BJ (cell line): ENCODE measurements at regions of chr11 and their contacts with region 1.

Region 1: DNA sequence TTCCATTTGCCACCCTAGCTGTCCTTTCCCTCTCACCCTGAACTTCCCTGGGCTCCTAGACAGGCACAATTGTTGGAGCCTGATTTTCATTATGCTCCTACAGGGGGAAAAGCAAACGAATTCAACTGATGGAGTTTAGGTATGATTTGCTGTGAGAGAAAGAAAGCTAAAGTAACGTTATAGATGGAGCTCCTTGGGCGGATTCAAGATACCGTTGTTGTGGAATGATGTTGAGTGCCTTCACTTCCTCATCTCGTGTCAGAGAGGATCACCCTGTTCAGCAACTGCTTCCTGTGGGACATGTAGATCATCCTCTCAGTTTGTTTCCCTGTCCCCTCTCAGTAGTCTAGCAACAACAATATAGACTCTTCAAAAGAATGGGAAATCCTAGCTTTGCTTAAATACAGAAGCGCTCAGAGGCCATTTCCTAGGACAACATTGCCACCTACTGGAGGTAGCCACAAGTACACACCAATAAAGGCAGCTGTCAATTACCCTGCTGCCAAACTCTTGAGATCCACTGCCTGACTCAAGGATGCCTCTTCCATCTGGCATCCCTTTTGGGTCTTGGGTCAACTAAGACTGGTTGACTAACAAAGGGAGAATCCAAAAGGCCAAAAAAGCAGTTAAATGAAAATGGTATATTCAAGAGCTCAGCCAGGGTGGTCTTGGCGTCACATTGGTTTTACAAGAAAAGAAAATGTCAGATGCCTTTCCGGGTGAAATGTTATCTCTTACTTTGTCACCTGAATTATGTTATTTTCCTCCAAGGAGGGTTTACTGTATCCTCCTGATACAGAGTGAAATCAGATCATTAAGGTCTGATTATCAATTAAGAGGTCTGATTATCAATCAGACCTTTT is 13.5 kb upstream of the DTX4 start:
- DNase-seq: no peak
- H3K4me3 ChIP-seq: no peak overlapping the region
- H3K27me3 ChIP-seq: peaks cover 4% of the 10 kb centered on the region
- CTCF ChIP-seq: peak; percentile 76

Region 2: GRCh38 chr11:58567889-58568512 is 590.4 kb before region 1 on chr11:
- CTCF ChIA-PET with region 1: interaction called, 11 read pairs
- POLR2A ChIA-PET with region 1: no interaction called
- DNase-seq: no peak
- H3K4me3 ChIP-seq: no peak overlapping the region
- H3K27me3 ChIP-seq: no peaks in the 10 kb centered on the region
- CTCF ChIP-seq: peak; percentile 85

Region 3: GRCh38 chr11:59097113-59097708 is 61.2 kb before region 1 on chr11:
- CTCF ChIA-PET with region 1: interaction called, 67 read pairs
- POLR2A ChIA-PET with region 1: no interaction called
- DNase-seq: no peak
- H3K4me3 ChIP-seq: no peak overlapping the region
- H3K27me3 ChIP-seq: no peaks in the 10 kb centered on the region; the same call in 1 of the 2 replicates
- CTCF ChIP-seq: peak; percentile 80

Region 4: GRCh38 chr11:59135648-59136461 is 22.6 kb before region 1 on chr11:
- CTCF ChIA-PET with region 1: interaction called, 56 read pairs
- POLR2A ChIA-PET with region 1: no interaction called
- DNase-seq: no peak
- H3K4me3 ChIP-seq: no peak overlapping the region
- H3K27me3 ChIP-seq: no peaks in the 10 kb centered on the region
- CTCF ChIP-seq: peak; percentile 100

Region 5: GRCh38 chr11:59207988-59208451 is 49.6 kb after region 1 on chr11:
- CTCF ChIA-PET with region 1: interaction called, 15 read pairs
- POLR2A ChIA-PET with region 1: no interaction called
- DNase-seq: peak; percentile 39
- H3K4me3 ChIP-seq: no peak overlapping the region
- H3K27me3 ChIP-seq: peaks cover 3% of the 10 kb centered on the region
- CTCF ChIP-seq: peak; percentile 73